Activated T-helper 2 cell treated with anti-CD3 and anti-CD28 coated beads, Interferon-gamma antibody, Interleukin-2, Interleukin-4, amounts not matched to agents 10 μg/mL and 5 μg/mL and 100 μg/mL, durations not matched to agents 14 hours and 24 hours and 36 hours (primary cell): ENCODE measurements at regions of chr18 and their contacts with region 1.

Region 1: GRCh38 chr18:50967714-50968661 is at the start of gene ELAC1:
- DNase-seq: peak; percentile 62
- H3K4me3 Mint-ChIP-seq: peak within 1 kb of the TSS; percentile 89
- H3K27ac Mint-ChIP-seq: peak within 1 kb of the TSS; percentile 90
- H3K4me1 Mint-ChIP-seq: peaks cover 18% of the 10 kb centered on the region
- H3K27me3 Mint-ChIP-seq: no peaks in the 10 kb centered on the region
- total RNA-seq, gene ELAC1: 6.7 and 6.8 TPM in 2 replicates

Region 2: DNA sequence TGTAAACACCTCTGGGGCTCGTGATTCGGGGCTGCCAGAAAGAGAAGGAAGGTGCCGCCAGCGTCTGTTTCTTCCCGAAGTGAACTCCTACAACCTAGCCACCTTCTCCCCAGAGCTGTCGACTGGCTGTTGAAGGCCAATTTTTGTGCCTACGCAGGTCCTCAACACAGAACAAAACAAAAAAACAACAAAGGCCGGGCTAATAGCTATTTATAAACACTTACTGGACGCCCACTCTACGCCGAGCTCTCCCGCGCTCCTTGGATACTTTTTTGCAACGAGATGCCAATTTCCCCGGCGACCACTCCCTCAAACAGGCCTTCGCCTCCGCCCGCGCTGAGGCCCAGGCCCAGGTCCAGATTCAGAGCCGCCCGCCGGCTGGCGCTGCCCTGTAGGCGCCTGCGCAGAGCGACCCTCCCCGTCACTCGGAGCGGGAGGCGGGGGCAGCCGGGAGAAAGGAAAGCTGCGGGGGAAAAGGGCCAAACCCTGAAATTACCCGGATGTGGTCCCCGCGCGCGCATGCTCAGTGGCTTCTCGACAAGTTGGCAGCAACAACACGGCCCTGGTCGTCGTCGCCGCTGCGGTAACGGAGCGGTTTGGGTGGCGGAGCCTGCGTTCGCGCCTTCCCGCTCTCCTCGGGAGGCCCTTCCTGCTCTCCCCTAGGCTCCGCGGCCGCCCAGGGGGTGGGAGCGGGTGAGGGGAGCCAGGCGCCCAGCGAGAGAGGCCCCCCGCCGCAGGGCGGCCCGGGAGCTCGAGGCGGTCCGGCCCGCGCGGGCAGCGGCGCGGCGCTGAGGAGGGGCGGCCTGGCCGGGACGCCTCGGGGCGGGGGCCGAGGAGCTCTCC is 61.9 kb after region 1 on chr18 and contains the start of gene SMAD4:
- intact Hi-C with region 1: loop called (anchors 2 kb)
- DNase-seq: peak; percentile 97
- H3K4me3 Mint-ChIP-seq: peak within 1 kb of the TSS; percentile 97
- H3K27ac Mint-ChIP-seq: peak within 1 kb of the TSS; percentile 92
- H3K4me1 Mint-ChIP-seq: peaks cover 44% of the 10 kb centered on the region
- H3K27me3 Mint-ChIP-seq: no peaks in the 10 kb centered on the region
- total RNA-seq, gene SMAD4: 73.0 and 77.1 TPM in 2 replicates